ENCODE measurements at regions of chr20 and their contacts with region 1.

Region 1: GRCh38 chr20:5090191-5090590 is 29.6 kb downstream of the PCNA start:
- DNase-seq: no peak
- H3K4me3 ChIP-seq: no peak overlapping the region
- H3K27ac ChIP-seq: no peak overlapping the region
- H3K4me1 ChIP-seq: no peaks in the 10 kb centered on the region
- H3K27me3 ChIP-seq: no peaks in the 10 kb centered on the region
- CTCF ChIP-seq: no peak

Region 2: GRCh38 chr20:4060064-4060795 is 1030.0 kb before region 1 on chr20:
- CTCF ChIA-PET with region 1: no interaction called
- POLR2A ChIA-PET with region 1: no interaction called
- intact Hi-C with region 1: no loop called
- DNase-seq: no peak
- H3K4me3 ChIP-seq: no peak overlapping the region
- H3K27ac ChIP-seq: no peak overlapping the region
- H3K4me1 ChIP-seq: peaks cover 19% of the 10 kb centered on the region
- H3K27me3 ChIP-seq: no peaks in the 10 kb centered on the region
- CTCF ChIP-seq: no peak

Region 3: GRCh38 chr20:4886771-4887527 is 203.2 kb before region 1 on chr20:
- CTCF ChIA-PET with region 1: interaction called, 10 read pairs
- POLR2A ChIA-PET with region 1: no interaction called
- intact Hi-C with region 1: no loop called
- DNase-seq: no peak
- H3K4me3 ChIP-seq: no peak overlapping the region
- H3K27ac ChIP-seq: no peak overlapping the region
- H3K4me1 ChIP-seq: no peaks in the 10 kb centered on the region
- H3K27me3 ChIP-seq: no peaks in the 10 kb centered on the region
- CTCF ChIP-seq: no peak

Region 4: GRCh38 chr20:4961746-4962145 is 128.4 kb before region 1 on chr20:
- CTCF ChIA-PET with region 1: interaction called, 5 read pairs
- POLR2A ChIA-PET with region 1: no interaction called
- intact Hi-C with region 1: loop called (anchors 10 kb)
- DNase-seq: no peak
- H3K4me3 ChIP-seq: no peak overlapping the region
- H3K27ac ChIP-seq: no peak overlapping the region
- H3K4me1 ChIP-seq: no peaks in the 10 kb centered on the region
- H3K27me3 ChIP-seq: no peaks in the 10 kb centered on the region
- CTCF ChIP-seq: no peak

Region 5: GRCh38 chr20:5008759-5009158 is 81.4 kb before region 1 on chr20:
- CTCF ChIA-PET with region 1: no interaction called
- POLR2A ChIA-PET with region 1: no interaction called
- intact Hi-C with region 1: no loop called
- DNase-seq: peak; percentile 49
- H3K4me3 ChIP-seq: no peak overlapping the region
- H3K27ac ChIP-seq: no peak overlapping the region
- H3K4me1 ChIP-seq: peaks cover 9% of the 10 kb centered on the region
- H3K27me3 ChIP-seq: no peaks in the 10 kb centered on the region
- CTCF ChIP-seq: no peak

Measured in A673 (cell line).